Right ventricle myocardium superior (tissue), 1 donor: ENCODE measurements at regions of chr6 and their contacts with region 1.

Region 1: DNA sequence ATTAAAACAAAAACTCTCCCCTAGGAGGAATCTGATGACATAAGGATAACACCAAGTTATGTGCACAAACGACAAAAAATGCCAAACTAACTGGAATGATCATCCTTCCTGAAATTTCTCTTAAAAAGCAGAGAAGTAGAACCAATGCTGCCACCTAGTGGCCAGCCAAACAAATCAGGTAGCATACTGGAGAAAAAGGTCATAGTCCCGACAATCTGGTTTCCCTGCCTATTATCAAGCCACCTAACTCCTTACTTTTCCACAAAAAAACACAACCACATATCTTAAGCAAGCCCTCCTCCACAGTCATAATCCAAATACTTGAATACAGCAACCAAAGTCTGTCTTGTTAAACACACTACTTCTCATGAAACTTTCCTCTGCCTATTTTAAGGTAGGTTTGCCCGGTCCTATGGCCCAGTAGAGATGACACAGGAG is 5.3 kb downstream of the OARD1 start:
- DNase-seq: peak; percentile 69
- ATAC-seq: peak; percentile 24

Region 2: GRCh38 chr6:41000248-41000647 is 66.6 kb before region 1 on chr6:
- intact Hi-C with region 1: loop called (anchors 10 kb)
- DNase-seq: no peak
- ATAC-seq: no peak

Region 3: GRCh38 chr6:41027799-41028628 is 38.9 kb before region 1 on chr6:
- intact Hi-C with region 1: loop called (anchors 5 kb)
- DNase-seq: peak; percentile 94
- ATAC-seq: peak; percentile 98

Region 4: DNA sequence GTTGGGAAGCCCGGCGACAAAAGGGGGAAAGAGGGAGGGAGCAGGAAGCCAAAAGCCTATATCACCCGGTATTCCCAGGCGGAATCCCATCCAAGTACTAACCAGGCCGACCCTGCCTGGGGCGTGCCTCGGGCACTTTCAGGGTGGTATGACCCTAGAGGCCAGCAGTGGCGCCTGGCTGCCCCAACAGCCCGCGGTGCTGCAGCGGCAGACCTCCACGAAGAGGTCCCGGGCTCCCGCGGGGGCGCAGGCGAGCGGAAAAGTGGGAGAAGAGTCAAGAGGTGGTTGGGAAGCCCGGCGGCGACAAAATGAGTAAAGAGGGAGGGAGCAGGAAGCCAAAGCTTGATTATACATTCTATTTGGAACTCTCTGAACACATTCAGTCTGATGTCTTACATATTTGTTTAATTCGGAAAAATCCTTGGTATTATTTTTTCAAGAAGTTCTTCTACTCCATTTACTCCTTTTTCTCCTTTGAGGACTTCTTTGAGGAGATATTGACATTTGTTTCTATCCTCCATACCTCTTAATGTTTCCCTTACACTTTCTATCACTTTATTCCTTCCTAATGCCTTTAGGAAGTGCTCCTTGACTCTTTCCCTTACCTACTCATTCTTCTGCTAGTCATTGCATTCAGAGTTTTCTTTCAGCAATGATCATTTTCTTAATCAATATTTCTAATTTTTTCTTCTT is 172.7 kb after region 1 on chr6:
- intact Hi-C with region 1: no loop called
- DNase-seq: no peak
- ATAC-seq: no peak

Region 5: DNA sequence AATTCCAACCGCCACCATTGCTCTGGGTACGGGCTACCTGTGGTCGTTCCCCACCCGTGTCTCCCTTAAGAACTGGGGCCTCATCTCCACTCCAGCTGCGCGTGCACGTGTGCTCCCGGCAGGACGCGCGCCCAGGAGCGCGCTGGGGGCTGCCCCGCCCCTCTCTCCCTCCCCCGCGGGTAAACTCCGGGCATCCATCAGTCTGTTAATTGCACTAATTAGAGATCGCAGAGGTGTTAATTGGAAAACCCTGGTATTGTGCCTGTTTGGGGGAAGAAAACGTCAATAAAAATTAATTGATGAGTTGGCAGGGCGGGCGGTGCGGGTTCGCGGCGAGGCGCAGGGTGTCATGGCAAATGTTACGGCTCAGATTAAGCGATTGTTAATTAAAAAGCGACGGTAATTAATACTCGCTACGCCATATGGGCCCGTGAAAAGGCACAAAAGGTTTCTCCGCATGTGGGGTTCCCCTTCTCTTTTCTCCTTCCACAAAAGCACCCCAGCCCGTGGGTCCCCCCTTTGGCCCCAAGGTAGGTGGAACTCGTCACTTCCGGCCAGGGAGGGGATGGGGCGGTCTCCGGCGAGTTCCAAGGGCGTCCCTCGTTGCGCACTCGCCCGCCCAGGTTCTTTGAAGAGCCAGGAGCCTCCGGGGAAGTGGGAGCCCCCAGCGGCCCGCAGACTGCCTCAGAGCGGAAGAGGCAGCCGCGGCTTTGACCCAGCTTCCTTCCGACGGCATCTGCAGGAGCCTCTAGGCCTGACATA is 493.7 kb after region 1 on chr6:
- intact Hi-C with region 1: no loop called
- DNase-seq: peak; percentile 86
- ATAC-seq: peak; percentile 94